ENCODE measurements at regions of chr3 and their contacts with region 1.

Region 1: GRCh38 chr3:136778865-136779264 is 26.7 kb upstream of the STAG1 start:
- DNase-seq: no peak
- ATAC-seq: no peak
- H3K4me3 ChIP-seq: no peak overlapping the region
- H3K27ac ChIP-seq: no peak overlapping the region
- H3K4me1 ChIP-seq: no peaks in the 10 kb centered on the region
- H3K27me3 ChIP-seq: no peaks in the 10 kb centered on the region
- CTCF ChIP-seq: no peak

Region 2: DNA sequence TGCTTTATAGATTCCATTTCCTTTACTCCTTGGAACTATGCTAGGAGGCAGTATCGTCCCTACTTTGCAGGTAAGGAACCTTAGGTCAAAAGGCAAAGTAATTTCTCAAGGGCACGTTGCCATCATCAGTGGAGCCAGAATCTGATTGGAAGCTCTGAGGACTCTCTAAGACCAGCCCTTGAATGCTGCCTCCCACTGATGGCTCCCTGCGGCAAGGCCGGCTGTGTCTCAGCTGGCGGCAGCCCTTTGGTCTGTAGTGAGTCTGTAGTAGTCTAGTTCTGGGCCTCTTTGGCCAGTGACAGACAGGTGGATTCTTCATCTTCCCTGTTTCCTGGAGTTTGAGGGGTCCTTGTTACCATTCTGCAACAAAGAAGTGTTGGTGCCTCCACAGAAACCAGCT is 452.5 kb before region 1 on chr3:
- intact Hi-C with region 1: no loop called
- DNase-seq: no peak
- ATAC-seq: no peak
- H3K4me3 ChIP-seq: no peak overlapping the region
- H3K27ac ChIP-seq: no peak overlapping the region
- H3K4me1 ChIP-seq: no peaks in the 10 kb centered on the region
- H3K27me3 ChIP-seq: no peaks in the 10 kb centered on the region
- CTCF ChIP-seq: no peak

Region 3: DNA sequence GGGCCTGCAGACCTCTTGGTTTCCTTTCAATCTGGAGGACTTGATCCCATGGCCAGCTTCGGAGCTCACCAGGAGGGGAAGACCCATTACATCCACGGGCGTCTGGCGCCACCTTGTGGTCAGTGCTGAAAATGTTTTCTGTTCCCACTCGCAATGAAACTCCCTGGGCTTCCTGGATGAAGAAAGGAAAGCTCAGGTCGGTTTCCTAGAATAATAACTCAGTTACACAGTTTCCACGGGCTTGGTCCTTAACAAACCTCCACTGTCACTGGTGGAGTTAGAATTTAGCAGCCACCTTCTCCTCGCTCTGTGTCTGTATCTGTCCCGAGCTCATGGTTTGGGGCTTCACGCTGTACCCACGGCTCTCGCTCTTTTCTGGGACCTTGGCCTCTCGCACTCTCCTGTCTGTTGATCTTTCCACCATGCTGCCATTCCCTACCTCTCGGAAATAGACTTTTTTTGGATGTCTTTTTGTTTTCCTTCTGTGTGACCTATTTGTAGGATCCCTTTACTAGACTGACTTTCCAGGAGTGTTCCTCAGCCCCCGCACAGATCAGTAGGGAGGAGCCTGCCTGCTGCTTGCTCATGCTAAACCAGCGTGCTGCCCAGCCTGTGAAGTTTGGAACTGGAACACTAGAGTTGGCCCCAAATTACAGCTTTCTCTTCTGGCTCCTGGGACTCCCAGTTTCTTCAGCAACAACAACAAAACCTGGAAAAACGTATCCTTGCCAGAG is 235.3 kb after region 1 on chr3:
- intact Hi-C with region 1: loop called in 1 of 3 experiments (anchors 10 kb)
- DNase-seq: peak; percentile 81 to 98 (median 92)
- ATAC-seq: peak; percentile 99
- H3K4me3 ChIP-seq: peak overlapping the region in 3 of 4 donors; percentile 22 to 44 (median 43)
- H3K27ac ChIP-seq: peak overlapping the region in 2 of 4 donors; percentile 41 to 56
- H3K4me1 ChIP-seq: no peaks in the 10 kb centered on the region
- H3K27me3 ChIP-seq: no peaks in the 10 kb centered on the region
- CTCF ChIP-seq: peak; percentile 82 to 91 (median 88)

Measured in pancreas (tissue), 10 donors.